K562 (cell line): ENCODE measurements at regions of chr17 and their contacts with region 1.

Region 1: GRCh38 chr17:42019509-42020404 is at the start of gene NKIRAS2:
- DNase-seq: peak; percentile 90 to 96 (median 92)
- ATAC-seq: peak; percentile 77
- H3K4me3 ChIP-seq: peak within 1 kb of the TSS; percentile 91
- H3K27ac ChIP-seq: peak within 1 kb of the TSS; percentile 73
- H3K4me1 ChIP-seq: peaks cover 39 to 45% of the 10 kb centered on the region in 2 experiments
- H3K27me3 ChIP-seq: no peaks in the 10 kb centered on the region
- CTCF ChIP-seq: peak; percentile 90 to 93 (median 91)
- EP300 ChIP-seq: peak; percentile 52
- POLR2A ChIP-seq: peak; percentile 80
- RAD21 ChIP-seq: no peak
- polyA plus RNA-seq, gene NKIRAS2: 10.1 to 14.6 TPM

Region 2: GRCh38 chr17:42002792-42003301 is 16.9 kb before region 1 on chr17:
- CTCF ChIA-PET with region 1: no interaction called
- POLR2A ChIA-PET with region 1: interaction called, 37 read pairs
- in situ Hi-C with region 1: no loop called
- intact Hi-C with region 1: no loop called
- DNase-seq: no peak
- ATAC-seq: no peak
- H3K4me3 ChIP-seq: no peak overlapping the region
- H3K27ac ChIP-seq: no peak overlapping the region
- H3K4me1 ChIP-seq: no peaks in the 10 kb centered on the region; a peak in 1 of 5 replicates
- H3K27me3 ChIP-seq: no peaks in the 10 kb centered on the region
- CTCF ChIP-seq: no peak
- EP300 ChIP-seq: no peak
- POLR2A ChIP-seq: no peak
- RAD21 ChIP-seq: no peak

Region 3: DNA sequence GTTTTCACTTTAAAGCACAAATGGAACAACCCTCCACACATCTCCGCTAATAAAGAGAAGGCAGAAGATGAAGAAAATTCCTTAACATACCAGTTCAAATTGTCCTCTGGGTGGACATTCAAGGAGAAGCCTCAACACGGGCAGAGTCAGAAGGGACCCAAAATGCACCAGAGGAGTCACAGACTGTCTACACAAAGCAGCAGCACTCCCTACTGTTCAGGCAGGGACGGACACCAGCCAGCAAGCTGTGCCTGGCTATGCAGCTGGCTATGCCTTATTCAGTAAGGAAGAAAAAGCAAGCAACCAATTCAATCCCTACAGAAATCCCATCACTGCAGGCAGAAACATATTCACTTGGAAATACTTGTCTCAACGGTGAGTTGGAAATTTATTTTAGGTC is 10.6 kb before region 1 on chr17:
- CTCF ChIA-PET with region 1: no interaction called
- POLR2A ChIA-PET with region 1: interaction called, 37 read pairs
- in situ Hi-C with region 1: no loop called
- intact Hi-C with region 1: no loop called
- DNase-seq: no peak
- ATAC-seq: peak; percentile 79
- H3K4me3 ChIP-seq: no peak overlapping the region
- H3K27ac ChIP-seq: no peak overlapping the region
- H3K4me1 ChIP-seq: peaks cover 0 to 17% of the 10 kb centered on the region in 2 experiments; a peak in 2 of 5 replicates
- H3K27me3 ChIP-seq: no peaks in the 10 kb centered on the region
- CTCF ChIP-seq: peak; percentile 20 to 37 (median 24); a peak in 3 of 6 replicates
- EP300 ChIP-seq: no peak
- POLR2A ChIP-seq: no peak
- RAD21 ChIP-seq: no peak

Region 4: GRCh38 chr17:42034059-42034458 is 14.3 kb after region 1 on chr17:
- CTCF ChIA-PET with region 1: interaction called, 3 read pairs
- POLR2A ChIA-PET with region 1: interaction called, 29 read pairs
- in situ Hi-C with region 1: no loop called
- intact Hi-C with region 1: no loop called
- DNase-seq: no peak
- ATAC-seq: no peak; the same call in 2 of the 3 replicates
- H3K4me3 ChIP-seq: no peak overlapping the region
- H3K27ac ChIP-seq: no peak overlapping the region
- H3K4me1 ChIP-seq: peaks cover 6 to 10% of the 10 kb centered on the region in 2 experiments; a peak in 3 of 5 replicates
- H3K27me3 ChIP-seq: no peaks in the 10 kb centered on the region
- CTCF ChIP-seq: no peak
- EP300 ChIP-seq: no peak
- POLR2A ChIP-seq: no peak
- RAD21 ChIP-seq: no peak

Region 5: GRCh38 chr17:42112552-42113176 is 92.9 kb after region 1 on chr17 and contains the start of gene DHX58:
- CTCF ChIA-PET with region 1: interaction called, 23 read pairs
- POLR2A ChIA-PET with region 1: interaction called, 3 read pairs
- in situ Hi-C with region 1: no loop called
- intact Hi-C with region 1: loop called (anchors 2 kb)
- DNase-seq: peak; percentile 42 to 71 (median 56)
- ATAC-seq: peak; percentile 72
- H3K4me3 ChIP-seq: no peak within 1 kb of the TSS
- H3K27ac ChIP-seq: peak within 1 kb of the TSS; percentile 53; the same call in 2 of the 3 replicates
- H3K4me1 ChIP-seq: peaks cover 12 to 59% of the 10 kb centered on the region in 2 experiments; a peak in 4 of 5 replicates
- H3K27me3 ChIP-seq: no peaks in the 10 kb centered on the region
- CTCF ChIP-seq: no peak
- EP300 ChIP-seq: no peak
- POLR2A ChIP-seq: peak; percentile 45; the same call in 1 of the 2 replicates
- RAD21 ChIP-seq: no peak
- polyA plus RNA-seq, gene DHX58: 0.15 to 0.25 TPM

Region 6: GRCh38 chr17:42248351-42249179 is 228.8 kb after region 1 on chr17:
- CTCF ChIA-PET with region 1: no interaction called
- POLR2A ChIA-PET with region 1: no interaction called
- in situ Hi-C with region 1: no loop called
- intact Hi-C with region 1: no loop called
- DNase-seq: no peak
- ATAC-seq: peak; percentile 36
- H3K4me3 ChIP-seq: no peak overlapping the region
- H3K27ac ChIP-seq: peak overlapping the region; percentile 40; the same call in 1 of the 3 replicates
- H3K4me1 ChIP-seq: peaks cover 8 to 23% of the 10 kb centered on the region in 2 experiments
- H3K27me3 ChIP-seq: no peaks in the 10 kb centered on the region
- CTCF ChIP-seq: no peak
- EP300 ChIP-seq: no peak
- POLR2A ChIP-seq: no peak
- RAD21 ChIP-seq: no peak